GM10248 (cell line): ENCODE measurements at regions of chr2 and their contacts with region 1.

Region 1: GRCh38 chr2:25700221-25700660 is 26.9 kb upstream of the DTNB start:
- DNase-seq: peak; percentile 52
- CTCF ChIP-seq: peak; percentile 71

Region 2: GRCh38 chr2:25606892-25607291 is 93.3 kb before region 1 on chr2:
- CTCF ChIA-PET with region 1: interaction called, 41 read pairs
- POLR2A ChIA-PET with region 1: no interaction called
- DNase-seq: peak; percentile 22
- CTCF ChIP-seq: peak; percentile 45

Region 3: DNA sequence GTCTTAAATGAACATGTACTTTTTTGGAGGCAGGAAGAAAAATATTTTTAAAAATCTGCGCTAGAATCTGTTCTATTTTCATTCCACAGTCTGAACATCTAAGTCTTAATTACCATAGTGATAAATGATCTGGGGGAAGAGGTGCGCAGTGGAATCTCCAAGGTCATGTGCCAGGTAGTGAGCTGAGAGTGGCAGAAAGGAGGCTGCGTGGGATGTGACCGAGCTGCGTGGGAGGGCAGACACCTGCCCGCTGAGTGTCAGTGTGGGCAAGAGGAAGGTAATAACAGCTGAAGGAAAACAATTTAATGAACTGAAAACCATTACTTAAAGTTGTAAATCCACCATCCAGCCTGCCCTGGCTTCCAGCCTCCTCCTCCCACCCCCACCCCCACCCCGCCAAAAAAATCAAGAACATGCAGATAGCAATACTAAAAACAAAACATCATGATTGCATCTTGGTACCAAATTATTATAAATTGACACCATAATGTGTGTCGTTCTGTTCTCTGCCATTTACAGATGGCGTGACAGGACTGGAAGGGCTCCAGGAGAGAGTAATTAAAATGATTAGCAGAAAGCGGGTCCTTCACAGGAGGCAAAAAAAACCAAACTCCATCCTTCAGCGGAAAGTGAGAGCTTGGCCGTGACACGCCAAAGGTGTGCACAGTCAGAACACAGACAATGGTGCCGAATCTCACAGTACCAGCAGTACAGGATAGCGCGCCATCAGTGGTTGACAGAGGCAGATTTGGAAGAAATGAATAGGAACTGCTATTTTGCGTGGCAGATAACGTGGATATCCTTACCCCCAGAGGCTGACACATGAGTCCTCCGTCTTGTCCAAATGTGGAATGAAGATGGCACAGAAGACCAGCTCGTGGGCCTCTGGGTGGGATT is 15.4 kb before region 1 on chr2:
- CTCF ChIA-PET with region 1: interaction called, 25 read pairs
- POLR2A ChIA-PET with region 1: no interaction called
- DNase-seq: no peak
- CTCF ChIP-seq: no peak

Region 4: GRCh38 chr2:25690058-25690457 is 10.2 kb before region 1 on chr2:
- CTCF ChIA-PET with region 1: interaction called, 25 read pairs
- POLR2A ChIA-PET with region 1: no interaction called
- DNase-seq: no peak
- CTCF ChIP-seq: no peak

Region 5: DNA sequence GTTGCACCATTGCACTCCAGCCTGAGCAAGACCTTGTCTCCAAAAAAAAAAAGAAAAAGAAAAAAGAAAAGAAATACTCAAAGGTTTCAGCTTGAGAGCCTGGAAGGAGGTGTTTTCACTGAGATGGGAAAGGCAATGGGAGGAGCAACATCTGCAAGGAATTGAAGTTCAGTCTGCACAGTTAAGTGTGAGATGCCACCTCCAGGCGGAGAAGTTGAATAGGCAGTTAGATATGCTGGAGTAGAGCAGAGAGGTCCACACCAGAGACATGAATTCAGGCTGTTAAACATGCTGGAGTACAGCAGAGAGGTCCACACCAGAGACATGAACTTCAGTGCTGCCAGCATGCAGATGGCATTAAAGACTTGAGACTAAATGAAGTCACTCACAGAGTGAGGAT is 14.5 kb after region 1 on chr2:
- CTCF ChIA-PET with region 1: interaction called, 31 read pairs
- POLR2A ChIA-PET with region 1: no interaction called
- DNase-seq: no peak
- CTCF ChIP-seq: no peak

Region 6: GRCh38 chr2:25720575-25720974 is 20.3 kb after region 1 on chr2:
- CTCF ChIA-PET with region 1: interaction called, 31 read pairs
- POLR2A ChIA-PET with region 1: no interaction called
- DNase-seq: no peak
- CTCF ChIP-seq: no peak